Cardiac septum (tissue), 1 donor: ENCODE measurements at regions of chr11 and their contacts with region 1.

Region 1: GRCh38 chr11:12411806-12412727 is 34.7 kb downstream of the PARVA start:
- DNase-seq: no peak

Region 2: GRCh38 chr11:12556788-12557384 is 144.8 kb after region 1 on chr11:
- intact Hi-C with region 1: loop called (anchors 10 kb)
- DNase-seq: peak; percentile 88